Left cardiac atrium (tissue), 4 donors: ENCODE measurements at regions of chr1 and their contacts with region 1.

Region 1: DNA sequence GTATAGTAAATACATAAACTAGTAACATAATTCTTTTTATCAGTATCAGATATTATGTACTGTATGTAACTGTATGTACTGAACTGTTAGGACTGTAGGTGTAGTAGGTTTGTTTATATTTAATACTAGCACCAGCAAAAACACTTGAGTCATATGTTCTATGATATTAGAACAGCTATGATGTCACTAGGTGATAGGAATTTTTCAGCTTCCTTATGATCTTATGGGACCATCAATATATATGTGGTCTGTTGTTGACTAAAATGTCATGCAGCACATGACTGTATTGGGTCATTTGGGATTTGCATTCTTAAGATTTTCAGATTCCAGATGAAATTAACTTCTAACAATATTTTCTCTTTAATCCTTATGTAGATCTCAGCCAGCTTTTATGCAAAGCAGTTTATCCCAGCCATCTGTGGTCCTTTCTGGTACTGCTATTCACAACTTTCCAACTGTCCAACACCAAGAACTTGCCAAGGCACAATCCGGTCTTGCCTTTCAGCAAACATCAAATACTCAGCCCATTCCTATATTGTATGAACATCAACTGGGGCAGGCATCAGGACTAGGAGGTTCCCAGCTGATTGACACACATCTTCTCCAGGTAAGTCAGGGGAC is 38.4 kb upstream of the MYOCOS start:
- DNase-seq: no peak
- ATAC-seq: no peak

Region 2: DNA sequence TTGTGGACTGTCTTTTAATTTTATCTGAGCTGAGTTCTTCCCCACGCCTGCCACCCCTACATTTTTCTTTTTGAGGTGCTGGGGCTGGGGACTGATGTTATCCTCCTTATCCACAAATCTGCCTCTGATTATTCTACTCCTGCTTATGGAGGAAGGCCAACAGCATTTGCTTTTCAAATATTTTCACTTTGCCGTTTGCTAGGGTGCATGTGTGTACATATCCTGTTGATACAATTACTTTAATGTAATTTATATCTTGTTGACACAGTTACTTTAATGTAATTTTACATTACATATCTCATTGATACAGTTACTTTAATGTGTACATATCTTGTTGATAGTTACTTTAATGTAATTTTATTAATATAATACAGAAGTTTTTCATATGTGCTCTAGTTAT is 62.1 kb before region 1 on chr1:
- intact Hi-C with region 1: loop called in 1 of 2 experiments (anchors 10 kb)
- DNase-seq: no peak
- ATAC-seq: no peak

Region 3: GRCh38 chr1:171530676-171531075 is 53.0 kb before region 1 on chr1:
- intact Hi-C with region 1: loop called (anchors 5 to 10 kb)
- DNase-seq: no peak
- ATAC-seq: no peak